Activated CD4-positive, alpha-beta memory T cell treated with anti-CD3 and anti-CD28 coated beads, Interleukin-2, amount 10 ng/mL, durations not matched to agents 7 days and 5 days (primary cell): ENCODE measurements at regions of chr3 and their contacts with region 1.

Region 1: GRCh38 chr3:39447637-39448483 is 19.6 kb upstream of the MOBP start:
- DNase-seq: peak; percentile 60
- H3K4me3 Mint-ChIP-seq: no peak overlapping the region
- H3K27ac Mint-ChIP-seq: no peak overlapping the region
- H3K4me1 Mint-ChIP-seq: no peaks in the 10 kb centered on the region
- H3K27me3 Mint-ChIP-seq: peaks cover 10% of the 10 kb centered on the region

Region 2: DNA sequence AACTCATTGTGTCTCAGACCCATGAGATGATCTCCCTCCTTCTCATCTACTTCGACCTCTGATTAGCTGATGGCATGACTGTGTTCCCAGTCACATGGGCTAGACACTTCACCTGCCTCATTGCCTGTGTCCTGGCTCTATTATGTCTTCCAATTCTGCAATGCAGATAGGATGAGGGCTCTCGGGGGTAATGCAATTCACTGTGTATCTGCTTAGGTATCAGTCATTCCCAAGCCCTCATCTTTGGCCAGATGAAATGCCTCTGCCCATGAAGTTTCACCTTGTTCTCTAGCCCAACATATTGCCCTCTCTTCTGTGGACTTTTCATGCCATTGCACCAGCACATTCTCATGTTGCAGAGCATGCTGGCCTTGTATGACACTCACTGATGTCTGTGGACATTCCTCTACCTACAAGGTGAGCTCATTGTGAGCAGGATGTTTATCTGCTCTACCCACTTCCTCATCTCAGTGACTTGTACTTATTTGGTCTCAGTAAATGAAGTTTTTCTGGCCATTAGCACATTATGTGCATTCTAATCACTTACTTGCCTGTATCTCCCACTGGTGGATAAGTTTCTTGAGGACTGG is 51.9 kb after region 1 on chr3:
- CTCF ChIA-PET with region 1: interaction called, 36 read pairs
- POLR2A ChIA-PET with region 1: no interaction called
- DNase-seq: no peak
- H3K4me3 Mint-ChIP-seq: no peak overlapping the region
- H3K27ac Mint-ChIP-seq: no peak overlapping the region
- H3K4me1 Mint-ChIP-seq: peaks cover 13% of the 10 kb centered on the region
- H3K27me3 Mint-ChIP-seq: peaks cover 49% of the 10 kb centered on the region